Caco-2 (cell line): ENCODE measurements at regions of chr5 and their contacts with region 1.

Region 1: GRCh38 chr5:87780831-87781760 is 368.4 kb upstream of the CCNH start:
- DNase-seq: peak; percentile 73 to 78
- H3K4me3 ChIP-seq: no peak overlapping the region
- H3K4me3 Mint-ChIP-seq: no peak overlapping the region
- H3K27ac Mint-ChIP-seq: no peak overlapping the region
- H3K4me1 ChIP-seq: no peaks in the 10 kb centered on the region
- H3K4me1 Mint-ChIP-seq: no peaks in the 10 kb centered on the region
- H3K27me3 ChIP-seq: no peaks in the 10 kb centered on the region
- H3K27me3 Mint-ChIP-seq: no peaks in the 10 kb centered on the region
- CTCF ChIP-seq: peak; percentile 86 to 92

Region 2: GRCh38 chr5:87844447-87844846 is 63.4 kb after region 1 on chr5:
- CTCF ChIA-PET with region 1: no interaction called
- POLR2A ChIA-PET with region 1: no interaction called
- intact Hi-C with region 1: loop called (anchors 1 kb)
- DNase-seq: no peak
- H3K4me3 ChIP-seq: no peak overlapping the region
- H3K4me3 Mint-ChIP-seq: no peak overlapping the region
- H3K27ac Mint-ChIP-seq: no peak overlapping the region
- H3K4me1 ChIP-seq: no peaks in the 10 kb centered on the region
- H3K4me1 Mint-ChIP-seq: no peaks in the 10 kb centered on the region
- H3K27me3 ChIP-seq: no peaks in the 10 kb centered on the region
- H3K27me3 Mint-ChIP-seq: peaks cover 2% of the 10 kb centered on the region
- CTCF ChIP-seq: no peak

Region 3: GRCh38 chr5:88680253-88681132 is 899.4 kb after region 1 on chr5:
- CTCF ChIA-PET with region 1: interaction called, 6 read pairs
- POLR2A ChIA-PET with region 1: no interaction called
- intact Hi-C with region 1: loop called (anchors 1 kb)
- DNase-seq: peak; percentile 58 to 86
- H3K4me3 ChIP-seq: peak overlapping the region; percentile 32
- H3K4me3 Mint-ChIP-seq: peak overlapping the region; percentile 48
- H3K27ac Mint-ChIP-seq: no peak overlapping the region
- H3K4me1 ChIP-seq: 0 out of 2 replicates have a peak, but pooled peaks cover 9% of the 10 kb centered on the region
- H3K4me1 Mint-ChIP-seq: peaks cover 11% of the 10 kb centered on the region
- H3K27me3 ChIP-seq: peaks cover 1% of the 10 kb centered on the region
- H3K27me3 Mint-ChIP-seq: peaks cover 50% of the 10 kb centered on the region
- CTCF ChIP-seq: peak; percentile 92

Region 4: DNA sequence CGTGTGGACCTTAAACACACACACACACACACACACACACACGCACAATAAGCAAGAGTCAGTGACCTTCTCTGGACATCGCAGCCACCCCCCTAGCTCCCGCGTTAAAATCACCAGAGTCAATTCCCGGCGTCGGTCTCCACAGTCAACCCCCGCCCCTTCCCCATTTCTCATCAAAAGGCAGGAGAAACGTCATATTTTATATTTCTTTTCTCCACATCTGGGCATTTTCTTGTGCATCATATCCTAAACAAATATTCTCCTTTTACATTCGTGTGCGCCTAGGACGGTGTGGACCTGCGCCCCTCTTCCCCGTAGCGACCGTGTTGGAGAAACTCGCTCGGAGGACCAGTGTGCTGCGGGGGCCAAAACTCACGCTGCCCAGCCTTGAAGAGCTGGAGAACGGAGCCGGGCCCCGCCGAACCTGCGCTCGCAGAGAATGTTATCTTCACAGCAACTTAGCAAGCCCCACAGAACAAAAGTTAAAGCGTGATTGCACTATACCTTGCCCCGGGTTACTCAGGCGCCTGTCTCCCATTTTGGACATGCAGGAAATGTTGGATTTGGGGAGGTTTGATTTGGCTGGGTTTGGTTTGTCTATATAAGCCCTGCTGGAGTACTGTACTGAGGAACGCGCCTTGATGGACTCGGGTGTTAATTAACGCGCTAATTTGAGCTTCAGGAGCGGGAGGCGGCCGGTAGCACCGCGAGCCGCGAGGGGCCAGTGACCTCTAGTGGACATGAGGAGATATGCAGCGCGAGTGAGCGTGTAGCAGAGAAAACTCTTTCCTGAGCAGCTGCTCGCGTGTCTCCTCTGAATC is 909.5 kb after region 1 on chr5:
- CTCF ChIA-PET with region 1: interaction called, 20 read pairs
- POLR2A ChIA-PET with region 1: no interaction called
- intact Hi-C with region 1: loop called (anchors 1 kb)
- DNase-seq: peak; percentile 50 to 63
- H3K4me3 ChIP-seq: no peak overlapping the region
- H3K4me3 Mint-ChIP-seq: peak overlapping the region; percentile 67
- H3K27ac Mint-ChIP-seq: no peak overlapping the region
- H3K4me1 ChIP-seq: no peaks in the 10 kb centered on the region
- H3K4me1 Mint-ChIP-seq: peaks cover 8% of the 10 kb centered on the region
- H3K27me3 ChIP-seq: peaks cover 10% of the 10 kb centered on the region
- H3K27me3 Mint-ChIP-seq: peaks cover 48% of the 10 kb centered on the region
- CTCF ChIP-seq: peak; percentile 93 to 95

Region 5: GRCh38 chr5:88724201-88724600 is 943.1 kb after region 1 on chr5:
- CTCF ChIA-PET with region 1: interaction called, 38 read pairs
- POLR2A ChIA-PET with region 1: no interaction called
- intact Hi-C with region 1: loop called (anchors 1 kb)
- DNase-seq: no peak
- H3K4me3 ChIP-seq: no peak overlapping the region
- H3K4me3 Mint-ChIP-seq: no peak overlapping the region
- H3K27ac Mint-ChIP-seq: no peak overlapping the region
- H3K4me1 ChIP-seq: no peaks in the 10 kb centered on the region
- H3K4me1 Mint-ChIP-seq: no peaks in the 10 kb centered on the region
- H3K27me3 ChIP-seq: no peaks in the 10 kb centered on the region
- H3K27me3 Mint-ChIP-seq: peaks cover 5% of the 10 kb centered on the region
- CTCF ChIP-seq: peak; percentile 19 to 25